OCI-LY7 (cell line): ENCODE measurements at regions of chr15 and their contacts with region 1.

Region 1: DNA sequence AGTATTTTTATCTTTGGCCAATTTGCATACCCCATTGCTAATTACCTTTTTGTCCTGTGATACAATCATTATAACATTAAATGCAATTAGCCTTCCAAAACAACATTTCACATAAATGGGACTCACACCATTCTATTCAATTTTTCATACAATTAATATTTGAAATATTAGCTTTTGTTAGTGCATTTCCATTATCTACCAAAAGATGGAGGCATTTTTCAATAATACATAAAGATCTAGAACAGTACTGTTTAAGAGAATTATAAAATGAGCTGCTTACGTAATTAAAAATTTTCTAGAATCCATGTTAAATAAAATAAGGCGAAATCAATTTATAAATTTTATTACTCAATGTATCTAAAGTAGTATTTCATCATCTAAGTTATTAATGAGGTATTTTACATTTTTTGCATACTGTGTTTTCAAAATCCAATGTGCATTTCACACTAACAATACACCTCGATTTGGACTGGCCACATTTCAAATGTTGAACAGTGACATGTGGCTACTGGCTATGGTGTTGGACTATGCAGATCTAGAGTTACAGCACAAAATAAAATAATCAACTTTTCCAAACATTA is 74.3 kb downstream of the TJP1 start:
- DNase-seq: peak; percentile 11
- H3K4me3 ChIP-seq: no peak overlapping the region
- H3K27ac ChIP-seq: no peak overlapping the region
- H3K4me1 ChIP-seq: no peaks in the 10 kb centered on the region
- CTCF ChIP-seq: peak; percentile 81

Region 2: DNA sequence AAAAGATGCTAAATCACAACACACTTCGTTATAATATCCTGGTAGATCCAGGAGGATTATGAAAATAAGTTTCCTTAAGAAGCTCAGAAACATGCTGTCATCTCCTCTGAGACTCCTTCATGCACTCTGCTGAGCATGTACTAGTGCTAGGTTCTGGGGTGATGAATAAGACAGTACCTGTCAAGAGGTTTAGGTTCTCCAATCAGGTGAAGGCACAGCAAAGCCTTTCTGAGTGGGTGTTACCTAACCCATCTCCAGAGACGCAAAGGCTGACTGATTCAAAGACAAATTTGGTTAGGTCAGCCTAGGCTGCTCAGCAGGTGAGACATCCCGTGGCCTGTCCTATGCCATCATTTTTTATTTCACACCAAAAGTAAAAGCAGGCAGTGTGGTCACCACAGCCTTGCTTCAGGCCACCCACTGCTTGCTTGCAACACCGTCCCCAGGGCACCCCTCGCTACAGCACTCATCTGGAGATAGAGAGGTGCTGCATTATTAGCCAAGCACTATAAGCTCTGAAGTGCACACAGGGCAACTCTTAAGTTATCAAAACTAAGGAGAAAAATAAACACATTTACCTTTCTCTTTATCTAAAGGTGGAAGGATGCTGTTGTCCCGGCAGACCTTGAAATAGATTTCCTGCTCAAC is 42.9 kb before region 1 on chr15:
- CTCF ChIA-PET with region 1: no interaction called
- POLR2A ChIA-PET with region 1: no interaction called
- intact Hi-C with region 1: no loop called
- DNase-seq: no peak
- H3K4me3 ChIP-seq: no peak overlapping the region
- H3K27ac ChIP-seq: no peak overlapping the region
- H3K4me1 ChIP-seq: no peaks in the 10 kb centered on the region
- CTCF ChIP-seq: no peak

Region 3: DNA sequence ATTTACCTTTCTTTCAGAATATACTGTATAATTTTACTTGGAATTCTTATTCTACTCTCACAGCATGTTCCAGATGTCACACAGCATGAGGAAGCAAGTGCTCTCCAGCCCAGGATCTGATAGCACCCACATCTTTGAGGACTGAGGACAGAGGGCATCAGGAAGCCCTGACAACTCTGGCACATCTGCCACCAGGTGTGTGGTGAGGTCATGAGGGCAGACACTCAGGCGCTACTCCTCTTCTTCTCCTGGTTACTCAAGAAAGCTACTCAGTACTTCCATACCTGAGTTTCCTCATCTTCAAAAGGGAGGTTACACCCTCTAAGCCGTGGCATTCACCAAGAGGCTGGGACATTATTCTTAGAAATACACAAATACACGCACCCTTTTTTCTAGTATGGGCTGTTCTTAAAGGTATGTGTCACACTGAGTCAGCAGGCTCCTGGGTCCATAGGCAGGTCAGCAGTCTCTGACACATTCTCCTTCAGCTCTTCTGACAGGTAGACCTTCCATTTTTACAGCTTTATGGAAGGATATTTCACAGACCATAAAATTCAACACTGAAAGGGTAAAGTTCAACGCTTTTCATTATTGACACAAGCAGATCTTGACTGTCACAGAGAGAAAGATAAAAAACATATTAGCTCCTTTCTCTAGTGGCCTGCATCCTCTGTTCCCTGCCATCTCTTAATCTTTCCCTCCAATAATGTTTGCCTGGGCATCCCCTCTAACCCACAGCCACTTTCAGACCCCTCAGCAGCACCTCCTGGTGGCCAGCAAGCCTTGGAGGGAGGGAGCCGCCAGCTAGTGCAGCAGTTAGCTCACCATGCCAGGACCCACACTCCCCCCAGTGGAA is 177.5 kb after region 1 on chr15:
- CTCF ChIA-PET with region 1: interaction called, 3 read pairs
- POLR2A ChIA-PET with region 1: interaction called, 4 read pairs
- intact Hi-C with region 1: loop called (anchors 2 kb)
- DNase-seq: peak; percentile 41
- H3K4me3 ChIP-seq: no peak overlapping the region
- H3K27ac ChIP-seq: no peak overlapping the region
- H3K4me1 ChIP-seq: no peaks in the 10 kb centered on the region
- CTCF ChIP-seq: peak; percentile 88

Region 4: DNA sequence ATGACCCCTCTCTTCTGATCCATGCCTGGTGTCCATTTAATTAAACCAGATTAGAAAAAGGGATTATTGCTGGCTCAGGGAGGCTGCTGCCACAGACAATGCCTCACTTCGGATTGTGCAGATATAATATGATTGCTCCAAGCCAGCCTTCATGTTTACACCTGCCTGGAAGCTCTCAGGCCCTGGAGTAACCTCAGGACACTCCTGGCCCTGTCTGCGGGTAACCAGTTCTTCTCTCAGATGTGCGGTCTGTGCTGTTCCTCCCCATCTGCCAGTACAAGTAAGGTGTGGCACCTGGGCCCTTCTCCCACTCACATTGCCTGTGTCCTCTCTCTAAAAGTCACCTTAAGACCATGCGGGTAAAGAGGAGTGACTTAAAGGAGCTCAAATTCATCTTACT is 326.0 kb after region 1 on chr15:
- CTCF ChIA-PET with region 1: no interaction called
- POLR2A ChIA-PET with region 1: no interaction called
- intact Hi-C with region 1: loop called (anchors 10 kb)
- DNase-seq: no peak
- H3K4me3 ChIP-seq: no peak overlapping the region
- H3K27ac ChIP-seq: no peak overlapping the region
- H3K4me1 ChIP-seq: no peaks in the 10 kb centered on the region
- CTCF ChIP-seq: no peak